Left cardiac atrium (tissue), 4 donors: ENCODE measurements at regions of chr4 and their contacts with region 1.

Region 1: DNA sequence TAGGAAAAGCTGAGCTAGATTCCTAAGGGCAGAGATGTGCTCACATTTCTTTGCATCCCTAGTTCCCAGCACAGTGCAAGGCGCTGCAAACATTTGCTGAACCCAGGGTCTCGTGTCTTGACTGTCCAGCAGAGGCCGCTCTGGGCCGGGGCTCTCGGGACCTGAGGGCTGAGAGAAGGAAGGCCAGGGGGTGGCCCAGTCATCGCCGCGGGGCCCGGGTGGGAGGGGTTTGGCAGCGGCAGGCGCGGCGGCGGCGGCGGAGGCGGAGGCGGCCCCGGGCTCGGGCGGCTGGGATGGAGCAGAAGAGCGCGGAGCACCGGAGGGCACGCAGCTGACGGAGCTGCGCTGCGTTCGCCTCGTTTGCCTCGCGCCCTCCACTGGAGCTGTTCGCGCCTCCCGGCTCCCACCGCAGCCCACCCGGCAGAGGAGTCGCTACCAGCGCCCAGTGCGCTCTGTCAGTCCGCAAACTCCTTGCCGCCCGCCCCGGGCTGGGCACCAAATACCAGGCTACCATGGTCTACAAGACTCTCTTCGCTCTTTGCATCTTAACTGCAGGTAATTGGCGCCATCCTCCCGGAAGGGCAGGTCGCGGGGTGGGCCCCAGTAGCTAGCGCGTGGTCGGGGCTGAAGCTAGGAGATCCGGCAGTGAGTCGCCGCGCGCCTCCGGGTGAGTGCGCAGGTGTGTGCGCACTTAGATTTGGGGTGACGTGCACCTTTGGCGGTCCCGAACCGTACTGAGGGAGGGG is at the start of gene PARM1:
- DNase-seq: peak; percentile 92
- ATAC-seq: peak; percentile 96 to 98
- total RNA-seq, gene PARM1: 89.1 to 91.8 TPM

Region 2: GRCh38 chr4:74969507-74970474 is 36.8 kb after region 1 on chr4:
- intact Hi-C with region 1: loop called in 1 of 2 experiments (anchors 2 kb)
- DNase-seq: peak; percentile 47
- ATAC-seq: peak; percentile 87 to 88

Region 3: GRCh38 chr4:75056277-75056676 is 123.3 kb after region 1 on chr4:
- intact Hi-C with region 1: loop called in 1 of 2 experiments (anchors 5 kb)
- DNase-seq: no peak
- ATAC-seq: peak; percentile 38 to 78

Region 4: GRCh38 chr4:75118739-75119138 is 185.8 kb after region 1 on chr4:
- intact Hi-C with region 1: loop called (anchors 5 kb)
- DNase-seq: no peak
- ATAC-seq: no peak

Region 5: DNA sequence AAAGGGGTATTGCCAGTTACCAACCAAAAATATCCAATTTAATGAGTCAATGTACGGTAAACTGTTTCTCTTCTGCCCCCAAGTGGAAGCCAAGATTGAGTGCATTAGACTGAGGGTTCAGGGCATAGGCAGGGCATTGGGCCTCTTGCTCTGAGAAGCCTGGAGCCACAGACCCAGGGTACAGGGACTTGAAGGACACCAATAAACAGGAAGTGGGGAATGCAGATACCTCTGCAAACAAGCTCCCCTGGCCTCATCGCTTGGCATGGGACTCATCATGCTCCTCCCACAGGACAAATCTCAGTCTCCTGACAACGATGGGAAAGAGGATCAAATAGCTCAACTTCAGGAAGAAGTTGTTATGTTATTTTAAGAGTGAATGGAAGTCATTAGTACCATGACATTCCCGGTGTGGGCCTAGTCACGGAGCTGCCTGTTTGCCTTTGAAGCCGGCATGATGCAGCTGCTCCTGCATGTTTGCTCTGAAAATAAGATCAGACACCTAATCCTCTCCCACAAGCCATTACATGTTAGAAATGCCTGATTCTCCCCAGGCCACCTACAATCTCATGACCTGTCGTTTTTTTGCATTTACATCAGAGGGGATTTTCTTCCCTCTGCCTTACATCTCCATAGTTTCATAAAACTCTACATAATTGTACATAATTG is 357.1 kb after region 1 on chr4:
- intact Hi-C with region 1: loop called in 1 of 2 experiments (anchors 5 kb)
- DNase-seq: no peak
- ATAC-seq: peak in 1 of 2 donors; percentile 41